Heart right ventricle (tissue), 16 donors: ENCODE measurements at regions of chr2 and their contacts with region 1.

Region 1: GRCh38 chr2:151409601-151410484 is at the start of gene RIF1:
- DNase-seq: peak; percentile 85 to 90
- ATAC-seq: peak; percentile 99 to 100 (median 99)
- H3K4me3 ChIP-seq: peak within 1 kb of the TSS; percentile 83 to 100 (median 94)
- H3K27ac ChIP-seq: peak within 1 kb of the TSS; percentile 81 to 99 (median 90)
- H3K4me1 ChIP-seq: peaks cover 0 to 22% (median 12%) of the 10 kb centered on the region in 9 donors
- H3K27me3 ChIP-seq: no peaks in the 10 kb centered on the region
- CTCF ChIP-seq: peak; percentile 42 to 89 (median 61)
- total RNA-seq, gene RIF1: 11.7 to 19.3 (median 15.8) TPM

Region 2: DNA sequence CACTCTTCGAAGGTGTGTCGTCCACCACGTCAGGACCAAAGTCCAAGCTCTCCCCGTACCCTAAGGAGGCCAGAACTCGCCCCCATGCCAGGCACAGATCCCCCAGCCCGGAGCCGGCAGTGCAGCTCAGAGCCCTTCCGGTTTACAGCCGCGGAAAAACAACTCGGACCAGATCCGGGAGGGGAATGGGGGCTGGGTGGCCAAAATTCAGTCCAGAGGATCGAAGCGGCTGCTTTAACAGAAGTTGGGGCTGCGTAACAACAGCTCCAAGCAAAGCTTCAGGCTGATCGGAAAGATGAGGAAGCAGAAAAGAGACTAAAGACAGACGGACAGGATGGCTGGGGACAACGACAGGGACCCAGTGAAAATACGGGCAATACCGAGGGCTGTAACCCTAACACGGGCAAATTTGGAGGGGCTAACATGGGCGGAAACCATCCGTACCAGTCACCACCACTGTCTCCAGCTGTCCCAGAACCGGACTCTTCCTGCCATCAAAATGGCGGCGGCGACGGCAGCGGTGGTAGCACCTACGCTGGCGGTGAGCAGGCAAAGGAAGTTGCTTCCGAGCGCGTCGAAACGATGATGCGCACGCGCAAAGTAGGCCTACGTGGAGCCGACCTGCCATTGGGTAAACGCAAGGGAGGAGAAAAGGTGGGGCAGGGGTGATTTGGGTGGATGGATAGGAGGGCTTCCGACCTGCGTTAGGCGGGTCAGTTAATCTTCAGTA is 1822.5 kb before region 1 on chr2 and contains the start of gene MMADHC:
- intact Hi-C with region 1: loop called in 1 of 10 experiments (anchors 5 kb)
- DNase-seq: peak; percentile 94
- ATAC-seq: peak; percentile 98 to 100 (median 99)
- H3K4me3 ChIP-seq: peak within 1 kb of the TSS; percentile 60 to 94 (median 78)
- H3K27ac ChIP-seq: peak within 1 kb of the TSS; percentile 92 to 99 (median 94)
- H3K4me1 ChIP-seq: peaks cover 0 to 51% (median 37%) of the 10 kb centered on the region in 9 donors
- H3K27me3 ChIP-seq: no peaks in the 10 kb centered on the region
- CTCF ChIP-seq: no peak
- total RNA-seq, gene MMADHC: 111 to 132 (median 127) TPM

Region 3: DNA sequence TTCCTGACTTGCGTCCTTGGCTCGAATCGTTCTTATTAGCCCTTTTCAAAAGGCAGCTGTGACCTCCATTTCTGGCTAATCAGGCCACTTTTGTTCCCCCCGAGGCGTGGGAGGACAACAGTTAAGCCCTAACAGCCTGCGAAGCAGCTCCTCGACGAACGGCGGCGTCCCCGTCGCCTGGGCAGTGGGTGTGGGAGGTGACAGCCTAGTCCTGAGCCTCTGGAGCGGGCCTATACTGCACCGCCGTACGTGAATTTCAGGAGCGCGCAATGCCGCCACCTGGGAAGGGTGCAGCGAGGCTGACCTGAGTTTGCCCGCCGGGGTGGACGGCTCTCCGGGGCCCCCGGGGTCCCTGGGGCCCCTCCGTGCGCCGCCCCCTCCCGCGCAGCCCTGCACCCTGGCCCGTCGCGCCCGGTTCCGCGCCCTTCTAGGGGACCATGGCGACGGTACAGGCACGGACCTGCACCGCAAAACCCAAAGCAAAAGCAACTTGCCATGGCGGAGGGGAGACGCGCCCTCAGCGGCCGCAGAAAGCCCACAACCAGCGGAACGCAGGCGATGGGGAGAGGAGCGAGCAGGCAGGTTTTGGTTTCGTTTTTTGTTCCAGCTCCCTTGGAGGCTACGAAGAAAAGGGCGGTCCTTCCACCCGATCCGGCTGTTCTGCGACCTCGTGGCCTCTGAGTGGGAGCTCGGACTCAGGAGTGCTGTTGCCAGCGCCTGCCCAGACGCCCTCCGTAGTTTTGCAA is 148.4 kb before region 1 on chr2 and contains the start of gene RBM43:
- intact Hi-C with region 1: loop called in 4 of 10 experiments (anchors 10 kb)
- DNase-seq: peak; percentile 86 to 91
- ATAC-seq: peak; percentile 93 to 98 (median 96)
- H3K4me3 ChIP-seq: peak within 1 kb of the TSS; percentile 53 to 97 (median 90)
- H3K27ac ChIP-seq: peak within 1 kb of the TSS; percentile 86 to 99 (median 94)
- H3K4me1 ChIP-seq: peaks cover 0 to 25% (median 12%) of the 10 kb centered on the region in 9 donors
- H3K27me3 ChIP-seq: no peaks in the 10 kb centered on the region
- CTCF ChIP-seq: peak in 1 of 9 donors; percentile 21
- total RNA-seq, gene RBM43: 0.96 to 2.9 (median 1.8) TPM

Region 4: GRCh38 chr2:151289369-151290088 is 120.3 kb before region 1 on chr2 and contains the start of gene NMI:
- intact Hi-C with region 1: loop called in 6 of 10 experiments (anchors 5 to 10 kb)
- DNase-seq: peak; percentile 81 to 83
- ATAC-seq: peak; percentile 90 to 96 (median 94)
- H3K4me3 ChIP-seq: peak within 1 kb of the TSS; percentile 58 to 83 (median 70)
- H3K27ac ChIP-seq: peak within 1 kb of the TSS; percentile 86 to 99 (median 95)
- H3K4me1 ChIP-seq: peaks cover 0 to 48% (median 0%) of the 10 kb centered on the region in 9 donors
- H3K27me3 ChIP-seq: no peaks in the 10 kb centered on the region
- CTCF ChIP-seq: no peak
- total RNA-seq, gene NMI: 2.3 to 12.8 (median 3.6) TPM